Dorsolateral prefrontal cortex (tissue), 120 donors: ENCODE measurements at regions of chr2 and their contacts with region 1.

Region 1: DNA sequence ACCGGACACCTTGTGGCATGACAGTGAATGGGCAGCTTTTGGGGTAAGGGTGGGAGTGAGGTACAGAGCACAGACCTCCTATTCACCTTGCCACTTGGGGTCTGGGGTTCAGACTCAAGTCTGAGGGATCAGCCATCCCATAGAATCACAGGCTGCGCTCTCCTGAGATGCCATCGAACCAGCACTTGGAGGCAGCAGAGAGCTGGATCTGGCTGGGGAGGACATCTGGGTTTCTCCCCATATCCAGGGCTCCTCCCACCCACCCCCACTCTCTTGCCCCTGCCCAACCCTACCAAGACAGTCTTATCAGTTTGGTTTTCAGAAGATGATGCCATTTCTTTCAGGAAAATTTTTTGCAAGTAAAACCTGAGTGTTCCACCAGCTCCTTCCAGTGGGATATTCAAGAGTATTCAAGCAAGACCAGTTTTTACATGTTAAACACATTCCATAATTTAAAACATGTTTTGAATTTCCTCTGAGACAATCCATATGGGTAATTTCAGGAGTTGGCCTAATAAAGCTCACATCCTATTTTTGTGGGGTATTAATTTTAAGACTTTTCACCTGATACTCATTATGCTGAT is 29.2 kb upstream of the TEX44 start:
- DNase-seq: peak; percentile 41 to 79 (median 70)
- H3K4me3 ChIP-seq: no peak overlapping the region
- H3K27ac ChIP-seq: peak overlapping the region in 18 of 59 donors; percentile 2 to 70 (median 42)
- H3K27me3 ChIP-seq: no peaks in the 10 kb centered on the region
- CTCF ChIP-seq: peak; percentile 49 to 92 (median 81)

Region 2: DNA sequence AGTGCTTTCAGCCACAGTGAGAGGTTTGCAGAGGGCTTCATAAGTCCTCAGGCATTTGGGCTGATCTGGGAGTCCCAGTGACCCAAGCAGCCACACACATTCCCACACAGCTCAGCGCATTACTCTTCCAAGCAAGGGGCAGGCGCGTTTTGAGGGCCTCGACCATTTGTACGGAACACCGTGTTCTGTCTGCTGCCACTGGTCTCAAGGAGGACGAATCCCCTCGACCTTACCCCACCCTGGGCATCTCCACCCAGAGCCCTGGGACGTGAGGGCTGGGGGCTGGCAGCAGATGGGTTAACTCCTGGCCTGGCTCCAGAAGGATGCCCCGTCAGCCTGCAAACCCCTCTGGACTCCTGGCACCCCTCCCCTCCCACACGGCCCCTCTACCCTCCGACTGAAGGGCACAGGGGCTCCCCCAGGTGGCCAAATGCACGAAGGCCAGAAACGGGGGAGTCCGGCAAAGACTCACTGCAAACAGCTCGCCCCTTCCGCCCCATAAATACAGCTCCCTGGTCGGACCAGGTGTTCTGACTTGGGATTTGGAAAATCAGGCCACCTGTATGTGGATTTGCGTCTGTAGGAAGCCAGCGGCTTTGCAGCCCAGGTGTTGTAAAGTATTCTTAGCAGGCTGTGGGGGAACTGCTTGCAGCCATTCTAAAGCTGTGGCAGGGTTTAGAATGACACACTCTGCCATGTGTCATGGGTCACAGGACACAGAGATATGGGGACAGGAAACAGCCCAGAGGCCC is 111.3 kb after region 1 on chr2:
- intact Hi-C with region 1: loop called (anchors 2 to 5 kb)
- DNase-seq: peak in 9 of 10 donors; percentile 58 to 79 (median 69)
- H3K4me3 ChIP-seq: peak overlapping the region in 5 of 59 donors; percentile 8 to 12 (median 9)
- H3K27ac ChIP-seq: peak overlapping the region; percentile 67 to 100 (median 91)
- H3K27me3 ChIP-seq: no peaks in the 10 kb centered on the region
- CTCF ChIP-seq: peak; percentile 65 to 95 (median 86)

Region 3: DNA sequence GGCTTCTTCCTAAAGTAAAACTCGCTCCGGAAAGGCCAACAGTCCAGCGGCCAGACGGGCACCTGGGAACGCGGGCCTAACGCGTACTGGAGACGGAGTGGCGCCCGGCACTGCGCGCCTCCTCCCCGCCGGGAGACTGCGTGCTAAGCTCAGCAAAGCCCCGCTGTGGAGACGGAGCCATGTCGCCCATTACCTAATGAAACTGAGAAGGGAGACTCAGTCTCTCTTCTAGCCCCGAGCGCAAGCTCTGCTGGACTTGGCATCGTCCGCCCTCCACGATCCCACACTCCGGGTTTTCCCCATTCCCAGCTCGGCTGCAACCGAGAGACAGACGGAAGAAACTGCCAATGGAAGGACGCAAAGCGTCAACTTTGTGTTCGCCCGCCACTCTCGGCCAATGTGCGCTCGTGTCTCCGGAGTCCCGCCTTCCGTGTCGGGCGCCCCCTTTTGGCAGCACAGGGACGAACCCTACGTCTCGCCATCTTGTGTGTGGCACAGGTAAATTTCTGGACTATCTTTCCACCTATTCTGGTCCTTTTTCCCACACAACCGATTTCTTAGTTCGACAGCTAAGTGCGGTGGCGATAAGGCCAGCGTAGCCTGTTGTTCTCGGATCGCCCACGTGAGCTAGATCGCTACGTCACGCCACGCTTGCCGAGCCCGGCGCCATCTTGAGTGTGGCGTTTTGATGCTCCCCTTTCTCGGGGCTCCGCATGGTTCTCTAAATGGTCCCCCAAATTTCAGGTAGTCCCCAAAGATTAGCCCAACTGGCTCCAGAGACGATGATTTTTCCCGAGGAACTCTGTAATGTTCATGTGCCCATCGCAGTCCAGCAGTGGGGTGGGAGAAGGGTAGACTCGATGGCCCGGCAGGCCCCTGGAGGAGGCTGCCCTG is 143.5 kb after region 1 on chr2:
- intact Hi-C with region 1: no loop called
- DNase-seq: peak; percentile 96 to 99 (median 98)
- H3K4me3 ChIP-seq: peak overlapping the region; percentile 73 to 100 (median 97)
- H3K27ac ChIP-seq: peak overlapping the region; percentile 97 to 100 (median 100)
- H3K27me3 ChIP-seq: no peaks in the 10 kb centered on the region
- CTCF ChIP-seq: peak; percentile 84 to 98 (median 93)